K562 (cell line): ENCODE measurements at regions of chr10 and their contacts with region 1.

Region 1: DNA sequence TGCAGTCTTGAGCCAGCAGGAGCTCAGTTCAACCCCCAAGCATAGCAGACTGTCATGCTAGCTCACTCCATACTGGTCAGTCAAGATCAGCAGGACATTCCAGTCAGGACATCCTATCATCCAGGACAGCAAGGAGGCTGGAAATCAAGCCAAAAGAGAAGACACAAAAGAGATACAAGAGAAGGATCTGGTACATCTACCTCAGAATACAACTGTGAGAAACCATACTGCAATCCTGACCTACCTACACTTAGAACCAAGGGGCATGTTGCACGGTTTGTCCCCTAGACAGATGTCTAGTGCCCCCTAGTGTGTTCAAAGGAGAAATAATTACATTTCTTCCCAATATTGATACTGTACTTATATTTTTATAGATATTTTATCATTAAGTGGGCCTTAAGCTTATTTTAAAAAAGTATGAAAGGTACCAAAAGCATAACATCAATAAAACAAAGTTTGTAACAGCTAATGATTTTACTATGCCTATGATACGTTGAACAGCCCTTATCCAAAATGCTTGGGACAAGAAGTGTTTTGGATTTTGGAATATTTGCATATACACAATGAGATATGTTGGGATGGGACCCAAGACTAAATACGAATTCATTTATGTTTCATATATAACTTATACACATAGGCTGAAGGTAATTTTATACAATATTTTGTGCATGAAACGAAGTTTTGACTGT is 26.7 kb downstream of the ERCC6 start:
- DNase-seq: peak in 3 of 4 experiments; percentile 44 to 51 (median 46)
- ATAC-seq: peak; percentile 92
- H3K4me3 ChIP-seq: no peak overlapping the region
- H3K27ac ChIP-seq: no peak overlapping the region
- H3K4me1 ChIP-seq: no peaks in the 10 kb centered on the region
- H3K27me3 ChIP-seq: no peaks in the 10 kb centered on the region
- CTCF ChIP-seq: peak; percentile 73 to 92 (median 75)
- EP300 ChIP-seq: no peak
- POLR2A ChIP-seq: no peak
- RAD21 ChIP-seq: peak; percentile 87 to 88

Region 2: GRCh38 chr10:48885383-48885782 is 626.9 kb before region 1 on chr10:
- CTCF ChIA-PET with region 1: interaction called, 3 read pairs
- POLR2A ChIA-PET with region 1: no interaction called
- in situ Hi-C with region 1: no loop called
- intact Hi-C with region 1: loop called (anchors 5 kb)
- DNase-seq: peak; percentile 42 to 70 (median 58)
- ATAC-seq: peak; percentile 73; the same call in 2 of the 3 replicates
- H3K4me3 ChIP-seq: no peak overlapping the region
- H3K27ac ChIP-seq: no peak overlapping the region
- H3K4me1 ChIP-seq: no peaks in the 10 kb centered on the region
- H3K27me3 ChIP-seq: peaks cover 3 to 12% of the 10 kb centered on the region in 2 experiments; a peak in 3 of 5 replicates
- CTCF ChIP-seq: peak; percentile 55 to 65 (median 56); a peak in 5 of 6 replicates
- EP300 ChIP-seq: no peak
- POLR2A ChIP-seq: no peak
- RAD21 ChIP-seq: peak; percentile 61 to 69

Region 3: GRCh38 chr10:49218480-49218879 is 293.8 kb before region 1 on chr10:
- CTCF ChIA-PET with region 1: no interaction called
- POLR2A ChIA-PET with region 1: no interaction called
- in situ Hi-C with region 1: no loop called
- intact Hi-C with region 1: loop called (anchors 5 kb)
- DNase-seq: peak in 2 of 4 experiments; percentile 43 to 48
- ATAC-seq: peak; percentile 86
- H3K4me3 ChIP-seq: no peak overlapping the region
- H3K27ac ChIP-seq: no peak overlapping the region
- H3K4me1 ChIP-seq: peaks cover 4 to 9% of the 10 kb centered on the region in 2 experiments; a peak in 3 of 5 replicates
- H3K27me3 ChIP-seq: no peaks in the 10 kb centered on the region
- CTCF ChIP-seq: peak; percentile 37 to 54 (median 47)
- EP300 ChIP-seq: no peak
- POLR2A ChIP-seq: no peak
- RAD21 ChIP-seq: peak; percentile 21 to 60; a peak in 2 of 4 replicates

Region 4: GRCh38 chr10:49268177-49268576 is 244.1 kb before region 1 on chr10:
- CTCF ChIA-PET with region 1: no interaction called
- POLR2A ChIA-PET with region 1: no interaction called
- in situ Hi-C with region 1: no loop called
- intact Hi-C with region 1: loop called (anchors 5 kb)
- DNase-seq: peak in 1 of 4 experiments; percentile 31
- ATAC-seq: peak; percentile 62
- H3K4me3 ChIP-seq: no peak overlapping the region
- H3K27ac ChIP-seq: no peak overlapping the region
- H3K4me1 ChIP-seq: peaks cover 2 to 11% of the 10 kb centered on the region in 2 experiments; a peak in 2 of 5 replicates
- H3K27me3 ChIP-seq: no peaks in the 10 kb centered on the region
- CTCF ChIP-seq: peak; percentile 10 to 43 (median 30); a peak in 2 of 6 replicates
- EP300 ChIP-seq: no peak
- POLR2A ChIP-seq: no peak
- RAD21 ChIP-seq: peak; percentile 42 to 65

Region 5: GRCh38 chr10:49579621-49580020 is 67.4 kb after region 1 on chr10:
- CTCF ChIA-PET with region 1: no interaction called
- POLR2A ChIA-PET with region 1: no interaction called
- in situ Hi-C with region 1: no loop called
- intact Hi-C with region 1: no loop called
- DNase-seq: no peak
- ATAC-seq: no peak
- H3K4me3 ChIP-seq: no peak overlapping the region
- H3K27ac ChIP-seq: no peak overlapping the region
- H3K4me1 ChIP-seq: no peaks in the 10 kb centered on the region
- H3K27me3 ChIP-seq: peaks cover 5 to 9% of the 10 kb centered on the region in 2 experiments; a peak in 2 of 5 replicates
- CTCF ChIP-seq: no peak
- EP300 ChIP-seq: no peak
- POLR2A ChIP-seq: no peak
- RAD21 ChIP-seq: no peak